ENCODE measurements at regions of chr19 and their contacts with region 1.

Region 1: GRCh38 chr19:6238643-6239281 is 41.0 kb downstream of the MLLT1 start:
- DNase-seq: peak; percentile 37
- H3K4me3 ChIP-seq: no peak overlapping the region
- H3K27ac ChIP-seq: peak overlapping the region; percentile 17
- H3K4me1 ChIP-seq: peaks cover 50% of the 10 kb centered on the region
- H3K27me3 ChIP-seq: no peaks in the 10 kb centered on the region
- CTCF ChIP-seq: no peak

Region 2: DNA sequence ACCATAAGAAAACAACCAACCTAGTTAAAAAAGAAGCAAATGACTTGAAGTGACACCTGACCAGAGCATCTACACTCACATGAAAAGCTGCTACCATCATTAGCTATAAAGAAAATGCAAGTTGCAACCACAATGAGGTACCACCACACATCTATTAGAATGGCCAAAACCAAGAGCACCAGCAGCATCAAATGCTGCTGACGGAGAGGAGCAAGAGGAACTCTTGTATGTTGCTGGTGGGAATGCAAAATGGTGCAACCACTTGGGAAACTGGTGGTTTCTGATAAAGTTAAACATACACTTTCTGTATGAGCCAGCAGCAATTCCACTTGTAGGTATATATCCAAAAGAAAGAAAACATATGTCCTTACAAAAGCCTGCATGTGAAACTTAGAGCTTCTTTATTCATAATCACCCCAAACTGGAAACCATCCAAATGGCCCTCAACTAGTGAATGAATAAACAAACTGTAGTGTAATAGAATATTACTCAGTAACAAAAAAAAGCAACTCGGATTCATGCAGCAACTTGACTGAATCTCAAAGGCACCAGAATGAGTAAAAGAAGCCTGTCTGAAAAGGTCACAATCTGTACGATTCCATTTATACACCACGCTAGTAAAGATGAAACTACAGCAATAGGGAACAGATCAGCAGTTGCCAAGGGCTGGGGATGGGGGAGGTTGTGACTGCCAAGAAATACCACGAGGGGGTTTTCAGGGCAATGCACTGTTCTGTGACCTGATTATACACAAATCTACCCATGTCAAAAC is 199.9 kb before region 1 on chr19:
- CTCF ChIA-PET with region 1: no interaction called
- dilution Hi-C with region 1: loop called (anchors 5 kb)
- in situ Hi-C with region 1: no loop called
- intact Hi-C with region 1: no loop called
- DNase-seq: no peak
- H3K4me3 ChIP-seq: no peak overlapping the region
- H3K27ac ChIP-seq: no peak overlapping the region
- H3K4me1 ChIP-seq: no peaks in the 10 kb centered on the region
- H3K27me3 ChIP-seq: no peaks in the 10 kb centered on the region
- CTCF ChIP-seq: no peak

Region 3: GRCh38 chr19:6116749-6117430 is 121.9 kb before region 1 on chr19:
- CTCF ChIA-PET with region 1: no interaction called
- dilution Hi-C with region 1: loop called (anchors 5 kb)
- in situ Hi-C with region 1: no loop called
- intact Hi-C with region 1: no loop called
- DNase-seq: no peak
- H3K4me3 ChIP-seq: no peak overlapping the region
- H3K27ac ChIP-seq: no peak overlapping the region
- H3K4me1 ChIP-seq: no peaks in the 10 kb centered on the region
- H3K27me3 ChIP-seq: no peaks in the 10 kb centered on the region
- CTCF ChIP-seq: no peak

Region 4: DNA sequence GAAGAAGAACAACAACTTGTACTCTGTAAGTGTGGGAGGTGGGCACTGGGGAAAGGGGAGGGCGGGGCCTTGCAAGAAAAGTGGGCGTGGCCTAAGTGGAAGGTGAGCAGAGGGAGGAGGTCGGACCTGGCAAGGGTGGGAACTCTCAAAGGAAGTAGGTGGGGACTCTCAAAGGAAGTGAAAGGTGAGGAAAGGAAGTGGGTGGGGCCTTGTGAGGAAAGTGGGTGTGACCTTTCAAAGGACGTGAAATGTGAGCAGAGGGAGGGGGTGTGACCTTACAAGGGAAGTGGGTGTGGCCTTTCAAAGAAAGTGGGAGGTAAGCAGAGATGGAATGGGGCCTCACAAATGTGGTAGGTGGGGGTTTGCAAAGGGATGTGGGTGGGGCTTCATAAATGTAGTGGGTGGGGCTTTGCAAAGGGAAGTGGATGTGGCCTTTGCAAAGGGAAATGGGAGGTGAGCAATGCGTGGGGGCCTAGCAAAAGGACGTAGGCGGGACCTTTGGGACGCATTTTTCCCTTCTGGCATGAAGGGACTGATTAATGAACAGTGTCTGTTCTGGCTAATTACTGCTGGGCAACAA is 77.4 kb before region 1 on chr19:
- CTCF ChIA-PET with region 1: no interaction called
- dilution Hi-C with region 1: loop called (anchors 5 kb)
- in situ Hi-C with region 1: no loop called
- intact Hi-C with region 1: no loop called
- DNase-seq: peak; percentile 9
- H3K4me3 ChIP-seq: no peak overlapping the region
- H3K27ac ChIP-seq: no peak overlapping the region
- H3K4me1 ChIP-seq: no peaks in the 10 kb centered on the region
- H3K27me3 ChIP-seq: no peaks in the 10 kb centered on the region
- CTCF ChIP-seq: no peak

Region 5: DNA sequence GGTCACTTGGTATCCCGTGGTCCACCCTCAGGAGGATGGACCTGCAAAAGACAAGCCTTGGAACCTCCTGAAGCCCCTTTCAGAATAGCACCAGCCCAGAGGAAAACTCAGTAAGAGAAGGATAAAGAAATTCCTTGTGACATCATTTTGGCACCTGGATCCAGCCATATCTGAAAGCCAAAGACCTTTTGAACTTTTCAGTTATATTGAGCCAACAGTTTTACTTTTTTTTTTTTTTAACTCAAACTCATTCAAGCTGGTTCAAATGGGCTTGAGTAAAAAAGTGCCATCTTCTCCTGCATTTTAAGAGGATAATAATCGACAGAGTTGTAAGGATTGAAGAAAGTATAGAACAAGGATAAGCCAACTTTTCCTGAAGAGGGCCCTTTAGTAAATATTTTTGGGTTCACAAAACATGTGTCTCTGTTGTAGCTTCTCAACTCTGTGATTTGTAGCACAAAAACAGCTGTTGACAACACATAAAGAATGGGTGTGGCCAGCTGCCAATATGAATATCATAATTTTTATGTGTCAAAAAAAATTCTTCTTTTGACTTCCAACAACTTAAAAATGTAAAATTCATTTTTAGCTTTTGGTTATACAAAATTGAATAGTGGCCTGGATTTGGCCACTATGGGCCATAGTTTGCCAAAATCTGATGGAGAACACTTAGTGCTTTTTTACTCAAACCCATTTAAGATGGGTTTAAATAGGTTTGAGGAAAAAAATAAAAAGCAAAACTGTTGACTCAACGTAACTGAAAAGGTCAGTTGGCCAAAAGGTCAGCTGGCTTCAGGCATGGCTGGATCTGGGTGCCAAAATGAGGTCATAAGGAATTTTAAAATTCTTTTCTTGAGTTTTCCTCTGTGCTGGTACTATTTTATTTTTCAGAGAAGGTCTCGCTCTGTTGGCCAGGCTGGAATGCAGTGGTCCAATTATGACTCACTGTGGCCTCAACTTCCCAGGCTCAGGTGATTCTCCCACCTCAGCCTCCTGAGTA is 52.6 kb before region 1 on chr19:
- CTCF ChIA-PET with region 1: no interaction called
- dilution Hi-C with region 1: no loop called
- in situ Hi-C with region 1: no loop called
- intact Hi-C with region 1: no loop called
- DNase-seq: no peak
- H3K4me3 ChIP-seq: no peak overlapping the region
- H3K27ac ChIP-seq: no peak overlapping the region
- H3K4me1 ChIP-seq: no peaks in the 10 kb centered on the region
- H3K27me3 ChIP-seq: no peaks in the 10 kb centered on the region
- CTCF ChIP-seq: no peak

Region 6: GRCh38 chr19:6273701-6274601 is 35.2 kb after region 1 on chr19:
- CTCF ChIA-PET with region 1: no interaction called
- dilution Hi-C with region 1: no loop called
- in situ Hi-C with region 1: no loop called
- intact Hi-C with region 1: loop called (anchors 5 kb)
- DNase-seq: peak; percentile 83
- H3K4me3 ChIP-seq: peak overlapping the region; percentile 24 to 45 (median 25)
- H3K27ac ChIP-seq: peak overlapping the region; percentile 67
- H3K4me1 ChIP-seq: peaks cover 44% of the 10 kb centered on the region
- H3K27me3 ChIP-seq: no peaks in the 10 kb centered on the region
- CTCF ChIP-seq: no peak

Region 7: GRCh38 chr19:6489278-6490061 is 250.7 kb after region 1 on chr19:
- CTCF ChIA-PET with region 1: no interaction called
- dilution Hi-C with region 1: loop called (anchors 5 kb)
- in situ Hi-C with region 1: no loop called
- intact Hi-C with region 1: no loop called
- DNase-seq: no peak
- H3K4me3 ChIP-seq: no peak overlapping the region
- H3K27ac ChIP-seq: no peak overlapping the region
- H3K4me1 ChIP-seq: no peaks in the 10 kb centered on the region
- H3K27me3 ChIP-seq: no peaks in the 10 kb centered on the region
- CTCF ChIP-seq: no peak